K562 (cell line): ENCODE measurements at regions of chr2 and their contacts with region 1.

Region 1: GRCh38 chr2:75608684-75609333 is 37.8 kb upstream of the MRPL19 start:
- DNase-seq: peak; percentile 67 to 82 (median 76)
- ATAC-seq: peak; percentile 98
- H3K4me3 ChIP-seq: no peak overlapping the region
- H3K27ac ChIP-seq: no peak overlapping the region
- H3K4me1 ChIP-seq: peaks cover 0 to 3% of the 10 kb centered on the region in 2 experiments; a peak in 2 of 5 replicates
- H3K27me3 ChIP-seq: peaks cover 0 to 24% of the 10 kb centered on the region in 2 experiments; a peak in 3 of 5 replicates
- CTCF ChIP-seq: peak; percentile 85 to 97 (median 85)
- EP300 ChIP-seq: no peak
- POLR2A ChIP-seq: no peak
- RAD21 ChIP-seq: peak; percentile 53 to 74

Region 2: DNA sequence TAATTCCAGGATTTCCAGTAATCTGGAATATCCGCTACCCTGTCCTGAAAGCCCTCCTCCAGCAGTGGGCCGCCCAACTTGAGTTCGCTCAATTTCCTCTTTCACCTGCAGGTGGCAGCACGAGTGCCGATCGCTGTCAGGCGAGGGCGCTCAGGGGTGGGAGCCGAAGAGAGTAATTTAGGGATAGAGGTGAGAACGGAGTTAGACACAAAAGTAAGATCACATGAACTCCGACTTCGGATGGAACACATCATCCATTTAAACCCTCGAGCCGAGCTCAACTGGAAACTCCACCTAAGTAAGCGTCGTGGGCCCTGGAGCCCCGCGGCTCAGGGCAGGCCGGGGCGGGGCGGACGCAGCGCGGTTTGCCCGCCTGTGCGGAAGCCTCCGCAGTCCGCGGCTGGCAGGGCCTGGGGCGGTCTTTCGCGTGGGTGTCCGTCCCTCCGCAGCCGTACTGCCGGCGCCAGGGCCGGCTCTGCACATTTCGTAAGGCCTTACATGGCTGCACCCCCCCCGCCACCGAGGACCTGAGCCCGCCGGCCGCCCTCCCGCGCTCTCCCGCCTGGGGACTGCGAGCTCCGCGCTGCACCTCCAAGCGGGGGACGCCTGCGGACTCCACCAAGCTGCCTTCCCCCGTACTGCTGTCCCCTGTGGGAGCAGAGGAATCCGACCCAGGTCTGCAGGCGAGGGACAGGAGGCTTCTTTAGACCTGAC is 893.6 kb before region 1 on chr2:
- CTCF ChIA-PET with region 1: no interaction called
- POLR2A ChIA-PET with region 1: no interaction called
- in situ Hi-C with region 1: loop called (anchors 25 kb)
- intact Hi-C with region 1: no loop called
- DNase-seq: peak; percentile 81 to 85 (median 84)
- ATAC-seq: peak; percentile 98
- H3K4me3 ChIP-seq: peak overlapping the region; percentile 39
- H3K27ac ChIP-seq: no peak overlapping the region
- H3K4me1 ChIP-seq: peaks cover 0 to 7% of the 10 kb centered on the region in 2 experiments; a peak in 2 of 5 replicates
- H3K27me3 ChIP-seq: peaks cover 14 to 34% of the 10 kb centered on the region in 2 experiments
- CTCF ChIP-seq: peak; percentile 92 to 98 (median 94)
- EP300 ChIP-seq: no peak
- POLR2A ChIP-seq: no peak
- RAD21 ChIP-seq: peak; percentile 75 to 86

Region 3: DNA sequence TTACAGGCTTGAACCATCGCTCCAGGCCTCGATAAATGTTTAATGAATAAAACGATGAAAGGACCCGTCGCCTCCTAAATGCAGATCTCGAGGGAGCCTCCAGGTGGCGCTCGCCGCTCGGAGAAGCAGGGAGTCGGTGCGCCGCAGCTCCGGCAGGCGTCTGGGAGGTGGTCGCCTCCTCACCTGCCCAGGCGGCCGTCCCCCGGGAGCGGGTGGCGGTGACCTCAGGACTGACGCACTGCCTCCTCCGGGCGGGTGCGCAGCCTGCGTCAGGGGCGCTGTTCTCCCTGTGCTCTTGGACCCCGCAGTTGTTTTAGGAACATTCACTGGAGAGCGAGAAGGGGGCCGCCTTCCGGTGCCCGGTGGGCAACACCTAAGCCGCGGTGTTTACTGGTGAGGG is 689.0 kb before region 1 on chr2:
- CTCF ChIA-PET with region 1: no interaction called
- POLR2A ChIA-PET with region 1: no interaction called
- in situ Hi-C with region 1: loop called (anchors 10 kb)
- intact Hi-C with region 1: loop called (anchors 5 kb)
- DNase-seq: peak; percentile 77 to 82 (median 80)
- ATAC-seq: peak; percentile 86
- H3K4me3 ChIP-seq: peak overlapping the region; percentile 18; the same call in 1 of the 2 replicates
- H3K27ac ChIP-seq: no peak overlapping the region
- H3K4me1 ChIP-seq: peaks cover 4 to 6% of the 10 kb centered on the region in 2 experiments; a peak in 2 of 5 replicates
- H3K27me3 ChIP-seq: peaks cover 3 to 40% of the 10 kb centered on the region in 2 experiments; a peak in 4 of 5 replicates
- CTCF ChIP-seq: peak; percentile 83 to 93 (median 89)
- EP300 ChIP-seq: no peak
- POLR2A ChIP-seq: no peak
- RAD21 ChIP-seq: peak; percentile 85 to 94

Region 4: GRCh38 chr2:75064691-75065396 is 544.0 kb before region 1 on chr2:
- CTCF ChIA-PET with region 1: interaction called, 3 read pairs
- POLR2A ChIA-PET with region 1: no interaction called
- in situ Hi-C with region 1: loop called (anchors 25 kb)
- intact Hi-C with region 1: loop called (anchors 10 kb)
- DNase-seq: peak; percentile 63 to 68 (median 64)
- ATAC-seq: peak; percentile 94
- H3K4me3 ChIP-seq: no peak overlapping the region
- H3K27ac ChIP-seq: no peak overlapping the region
- H3K4me1 ChIP-seq: no peaks in the 10 kb centered on the region
- H3K27me3 ChIP-seq: peaks cover 0 to 10% of the 10 kb centered on the region in 2 experiments; a peak in 3 of 5 replicates
- CTCF ChIP-seq: peak; percentile 79 to 93 (median 86)
- EP300 ChIP-seq: no peak
- POLR2A ChIP-seq: no peak
- RAD21 ChIP-seq: peak; percentile 58 to 82

Region 5: GRCh38 chr2:75076088-75076487 is 532.7 kb before region 1 on chr2:
- CTCF ChIA-PET with region 1: no interaction called
- POLR2A ChIA-PET with region 1: no interaction called
- in situ Hi-C with region 1: loop called (anchors 25 kb)
- intact Hi-C with region 1: loop called (anchors 10 kb)
- DNase-seq: no peak
- ATAC-seq: no peak
- H3K4me3 ChIP-seq: no peak overlapping the region
- H3K27ac ChIP-seq: no peak overlapping the region
- H3K4me1 ChIP-seq: no peaks in the 10 kb centered on the region
- H3K27me3 ChIP-seq: peaks cover 0 to 3% of the 10 kb centered on the region in 2 experiments; a peak in 1 of 5 replicates
- CTCF ChIP-seq: no peak
- EP300 ChIP-seq: no peak
- POLR2A ChIP-seq: no peak
- RAD21 ChIP-seq: no peak

Region 6: DNA sequence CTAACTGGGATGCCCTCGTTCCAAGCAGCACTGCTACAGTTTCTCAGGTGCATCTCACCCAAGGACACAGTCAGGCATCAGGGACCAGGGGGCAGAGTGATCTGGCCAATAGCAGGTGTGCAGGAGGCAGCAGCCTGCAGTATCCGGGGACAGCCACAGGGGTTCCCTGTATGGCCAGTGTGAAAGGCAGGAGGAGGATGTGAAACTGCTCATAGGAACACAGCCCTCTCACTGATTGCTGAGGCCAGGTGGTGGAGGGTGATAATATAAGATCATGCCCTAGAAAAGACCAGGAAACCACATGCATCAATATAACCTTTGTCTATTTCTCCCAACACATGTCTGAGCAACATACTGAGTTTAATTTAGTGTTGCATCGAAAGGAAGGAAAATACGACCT is 296.8 kb before region 1 on chr2:
- CTCF ChIA-PET with region 1: no interaction called
- POLR2A ChIA-PET with region 1: no interaction called
- in situ Hi-C with region 1: no loop called
- intact Hi-C with region 1: loop called (anchors 10 kb)
- DNase-seq: peak in 3 of 4 experiments; percentile 10 to 25 (median 24)
- ATAC-seq: peak; percentile 91
- H3K4me3 ChIP-seq: no peak overlapping the region
- H3K27ac ChIP-seq: no peak overlapping the region
- H3K4me1 ChIP-seq: peaks cover 0 to 5% of the 10 kb centered on the region in 2 experiments; a peak in 1 of 5 replicates
- H3K27me3 ChIP-seq: no peaks in the 10 kb centered on the region; a peak in 1 of 5 replicates
- CTCF ChIP-seq: peak in 1 of 3 experiments; percentile 37; a peak in 2 of 6 replicates
- EP300 ChIP-seq: no peak
- POLR2A ChIP-seq: no peak
- RAD21 ChIP-seq: no peak

Region 7: GRCh38 chr2:75466708-75467311 is 142.0 kb before region 1 on chr2:
- CTCF ChIA-PET with region 1: interaction called, 11 read pairs
- POLR2A ChIA-PET with region 1: interaction called, 3 read pairs
- in situ Hi-C with region 1: loop called (anchors 10 kb)
- intact Hi-C with region 1: loop called (anchors 2 kb)
- DNase-seq: peak; percentile 54 to 68 (median 66)
- ATAC-seq: peak; percentile 86
- H3K4me3 ChIP-seq: no peak overlapping the region
- H3K27ac ChIP-seq: no peak overlapping the region
- H3K4me1 ChIP-seq: no peaks in the 10 kb centered on the region
- H3K27me3 ChIP-seq: no peaks in the 10 kb centered on the region
- CTCF ChIP-seq: peak; percentile 56 to 77 (median 74)
- EP300 ChIP-seq: no peak
- POLR2A ChIP-seq: no peak
- RAD21 ChIP-seq: peak in 1 of 2 experiments; percentile 51; a peak in 3 of 4 replicates